PC-3 (cell line): ENCODE measurements at regions of chr3 and their contacts with region 1.

Region 1: GRCh38 chr3:167032261-167032876 is 347.7 kb downstream of the ZBBX start:
- DNase-seq: peak; percentile 83
- ATAC-seq: peak; percentile 73
- H3K4me3 ChIP-seq: no peak overlapping the region
- H3K27ac ChIP-seq: no peak overlapping the region
- H3K4me1 ChIP-seq: no peaks in the 10 kb centered on the region
- H3K27me3 ChIP-seq: no peaks in the 10 kb centered on the region
- CTCF ChIP-seq: peak; percentile 85

Region 2: GRCh38 chr3:165854696-165855095 is 1177.7 kb before region 1 on chr3:
- CTCF ChIA-PET with region 1: interaction called, 9 read pairs
- POLR2A ChIA-PET with region 1: no interaction called
- intact Hi-C with region 1: loop called (anchors 5 kb)
- DNase-seq: peak; percentile 58
- ATAC-seq: peak; percentile 21
- H3K4me3 ChIP-seq: no peak overlapping the region
- H3K27ac ChIP-seq: no peak overlapping the region
- H3K4me1 ChIP-seq: peaks cover 8% of the 10 kb centered on the region
- H3K27me3 ChIP-seq: no peaks in the 10 kb centered on the region
- CTCF ChIP-seq: peak; percentile 85

Region 3: DNA sequence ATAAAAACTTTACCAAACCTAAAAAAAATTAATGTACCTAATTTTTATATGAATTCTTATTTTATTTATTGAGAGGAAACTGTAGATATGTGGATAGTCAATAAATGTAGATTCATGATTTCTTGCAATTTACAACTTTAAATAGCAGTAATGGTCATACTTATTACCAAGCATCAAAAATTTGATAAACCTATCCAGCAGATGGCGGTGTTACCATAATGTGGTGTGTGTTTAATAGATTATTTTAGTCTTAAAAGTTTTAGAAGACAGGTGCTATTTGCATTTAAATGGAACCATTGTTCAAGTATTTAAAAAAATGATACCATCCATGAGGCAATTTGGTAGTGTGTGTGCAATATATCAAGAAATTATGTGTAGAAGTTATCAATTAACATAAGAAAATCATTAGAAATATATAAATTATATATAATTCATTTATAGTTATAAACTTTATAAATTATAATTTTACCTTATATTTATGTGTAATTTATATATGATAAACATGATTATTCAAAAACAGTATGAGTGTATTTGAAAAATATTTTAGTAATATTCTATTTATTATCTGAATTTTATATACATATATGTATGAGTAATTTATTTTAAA is 1019.2 kb before region 1 on chr3:
- CTCF ChIA-PET with region 1: no interaction called
- POLR2A ChIA-PET with region 1: no interaction called
- intact Hi-C with region 1: loop called (anchors 2 kb)
- DNase-seq: peak; percentile 81
- ATAC-seq: peak; percentile 38; the same call in 1 of the 2 replicates
- H3K4me3 ChIP-seq: no peak overlapping the region
- H3K27ac ChIP-seq: no peak overlapping the region
- H3K4me1 ChIP-seq: no peaks in the 10 kb centered on the region
- H3K27me3 ChIP-seq: no peaks in the 10 kb centered on the region
- CTCF ChIP-seq: peak; percentile 75

Region 4: DNA sequence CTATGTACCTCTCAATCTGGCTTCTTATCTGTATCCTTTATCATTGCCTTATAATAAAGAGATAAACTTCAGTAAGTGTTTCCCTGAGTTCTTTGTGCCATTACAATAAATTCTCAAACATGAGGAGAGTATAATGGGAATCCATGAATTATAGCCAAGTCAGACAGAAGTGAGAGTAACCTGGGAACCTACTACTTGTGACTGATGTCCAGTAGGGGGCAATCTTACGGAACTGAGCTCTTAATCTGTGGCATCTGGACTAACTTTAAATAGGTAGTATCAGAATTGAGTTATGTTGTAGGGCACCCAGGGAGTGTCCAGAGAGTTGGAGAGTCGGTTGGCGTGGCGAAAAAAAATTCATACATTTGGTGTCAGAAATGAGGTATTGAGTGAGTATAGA is 194.8 kb before region 1 on chr3:
- CTCF ChIA-PET with region 1: interaction called, 7 read pairs
- POLR2A ChIA-PET with region 1: no interaction called
- intact Hi-C with region 1: loop called (anchors 2 kb)
- DNase-seq: peak; percentile 66
- ATAC-seq: peak; percentile 73
- H3K4me3 ChIP-seq: no peak overlapping the region
- H3K27ac ChIP-seq: no peak overlapping the region
- H3K4me1 ChIP-seq: 0 out of 2 replicates have a peak, but pooled peaks cover 6% of the 10 kb centered on the region
- H3K27me3 ChIP-seq: no peaks in the 10 kb centered on the region
- CTCF ChIP-seq: peak; percentile 80

Region 5: DNA sequence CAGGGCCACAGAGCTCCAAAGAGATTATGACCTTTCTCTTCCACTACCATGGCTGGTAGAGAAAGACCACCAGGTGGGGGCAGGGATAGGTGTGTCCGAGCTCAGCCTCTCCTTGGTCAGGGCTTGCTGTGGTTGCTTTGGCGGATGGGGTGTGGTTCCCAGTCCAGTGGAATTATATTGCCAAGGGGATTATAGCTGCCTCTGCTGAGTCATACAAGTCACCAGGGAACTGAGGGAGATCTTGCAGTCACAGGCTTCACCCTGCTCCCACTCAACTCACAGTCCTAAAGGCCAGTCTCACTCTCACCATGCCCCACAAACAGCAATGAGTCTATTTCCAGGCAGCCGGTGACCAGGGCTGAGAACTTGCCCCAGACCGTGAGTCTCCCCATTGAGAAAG is 76.8 kb before region 1 on chr3:
- CTCF ChIA-PET with region 1: no interaction called
- POLR2A ChIA-PET with region 1: no interaction called
- intact Hi-C with region 1: no loop called
- DNase-seq: peak; percentile 27
- ATAC-seq: no peak; the same call in 1 of the 2 replicates
- H3K4me3 ChIP-seq: no peak overlapping the region
- H3K27ac ChIP-seq: no peak overlapping the region
- H3K4me1 ChIP-seq: no peaks in the 10 kb centered on the region
- H3K27me3 ChIP-seq: no peaks in the 10 kb centered on the region
- CTCF ChIP-seq: no peak

Region 6: GRCh38 chr3:167151636-167152035 is 119.3 kb after region 1 on chr3:
- CTCF ChIA-PET with region 1: interaction called, 4 read pairs
- POLR2A ChIA-PET with region 1: no interaction called
- intact Hi-C with region 1: loop called (anchors 1 kb)
- DNase-seq: no peak
- ATAC-seq: no peak
- H3K4me3 ChIP-seq: no peak overlapping the region
- H3K27ac ChIP-seq: no peak overlapping the region
- H3K4me1 ChIP-seq: no peaks in the 10 kb centered on the region
- H3K27me3 ChIP-seq: no peaks in the 10 kb centered on the region
- CTCF ChIP-seq: no peak